ENCODE measurements at regions of chr6 and their contacts with region 1.

Region 1: DNA sequence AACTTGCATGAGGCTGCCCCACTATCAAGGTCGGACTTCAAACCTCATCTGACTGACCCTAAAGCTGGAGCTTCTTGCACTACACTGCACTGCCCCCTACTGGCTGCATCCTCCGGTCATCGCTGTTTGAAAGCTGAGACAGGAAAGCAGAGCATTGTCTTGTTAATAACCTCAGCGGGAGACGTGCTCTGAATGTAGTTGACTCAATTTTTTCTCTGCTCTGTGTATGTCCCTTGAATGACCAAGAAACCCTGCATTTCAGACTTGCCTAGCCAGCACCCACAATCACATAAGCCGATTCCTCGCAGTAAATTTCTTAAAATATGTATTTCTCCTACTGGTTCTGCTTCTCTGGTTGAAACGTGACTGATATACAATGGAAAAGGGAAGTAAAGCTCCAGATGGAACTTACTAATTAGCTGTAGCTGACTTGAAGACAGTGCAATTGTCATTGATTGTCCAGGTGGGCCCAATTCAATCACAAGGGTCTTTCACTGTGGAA is 27.8 kb downstream of the TCF21 start:
- DNase-seq: peak; percentile 60
- H3K4me3 ChIP-seq: no peak overlapping the region; a peak in 1 of 4 replicates
- H3K27ac ChIP-seq: no peak overlapping the region
- H3K4me1 ChIP-seq: peaks cover 0 to 2% of the 10 kb centered on the region in 2 experiments; a peak in 1 of 4 replicates
- H3K27me3 ChIP-seq: peaks cover 5% of the 10 kb centered on the region
- CTCF ChIP-seq: peak; percentile 94
- EP300 ChIP-seq: no peak
- RAD21 ChIP-seq: peak; percentile 88

Region 2: GRCh38 chr6:133568970-133569889 is 347.5 kb before region 1 on chr6:
- CTCF ChIA-PET with region 1: interaction called, 68 read pairs
- POLR2A ChIA-PET with region 1: no interaction called
- DNase-seq: peak; percentile 50
- H3K4me3 ChIP-seq: peak overlapping the region; percentile 35 to 52; a peak in 3 of 4 replicates
- H3K27ac ChIP-seq: no peak overlapping the region
- H3K4me1 ChIP-seq: peaks cover 0 to 5% of the 10 kb centered on the region in 2 experiments; a peak in 2 of 4 replicates
- H3K27me3 ChIP-seq: peaks cover 13% of the 10 kb centered on the region; the same call in 1 of the 2 replicates
- CTCF ChIP-seq: peak; percentile 95
- EP300 ChIP-seq: no peak
- RAD21 ChIP-seq: peak; percentile 61

Region 3: GRCh38 chr6:133817460-133818047 is 99.1 kb before region 1 on chr6:
- CTCF ChIA-PET with region 1: interaction called, 14 read pairs
- POLR2A ChIA-PET with region 1: no interaction called
- DNase-seq: peak; percentile 56
- H3K4me3 ChIP-seq: no peak overlapping the region
- H3K27ac ChIP-seq: no peak overlapping the region
- H3K4me1 ChIP-seq: no peaks in the 10 kb centered on the region
- H3K27me3 ChIP-seq: no peaks in the 10 kb centered on the region; the same call in 1 of the 2 replicates
- CTCF ChIP-seq: peak; percentile 76
- EP300 ChIP-seq: no peak
- RAD21 ChIP-seq: peak; percentile 42

Region 4: GRCh38 chr6:133837801-133838349 is 78.8 kb before region 1 on chr6:
- CTCF ChIA-PET with region 1: interaction called, 15 read pairs
- POLR2A ChIA-PET with region 1: no interaction called
- DNase-seq: peak; percentile 49
- H3K4me3 ChIP-seq: peak overlapping the region; percentile 42 to 61
- H3K27ac ChIP-seq: no peak overlapping the region
- H3K4me1 ChIP-seq: no peaks in the 10 kb centered on the region; a peak in 1 of 4 replicates
- H3K27me3 ChIP-seq: peaks cover 27% of the 10 kb centered on the region
- CTCF ChIP-seq: peak; percentile 66
- EP300 ChIP-seq: no peak
- RAD21 ChIP-seq: peak; percentile 44

Region 5: DNA sequence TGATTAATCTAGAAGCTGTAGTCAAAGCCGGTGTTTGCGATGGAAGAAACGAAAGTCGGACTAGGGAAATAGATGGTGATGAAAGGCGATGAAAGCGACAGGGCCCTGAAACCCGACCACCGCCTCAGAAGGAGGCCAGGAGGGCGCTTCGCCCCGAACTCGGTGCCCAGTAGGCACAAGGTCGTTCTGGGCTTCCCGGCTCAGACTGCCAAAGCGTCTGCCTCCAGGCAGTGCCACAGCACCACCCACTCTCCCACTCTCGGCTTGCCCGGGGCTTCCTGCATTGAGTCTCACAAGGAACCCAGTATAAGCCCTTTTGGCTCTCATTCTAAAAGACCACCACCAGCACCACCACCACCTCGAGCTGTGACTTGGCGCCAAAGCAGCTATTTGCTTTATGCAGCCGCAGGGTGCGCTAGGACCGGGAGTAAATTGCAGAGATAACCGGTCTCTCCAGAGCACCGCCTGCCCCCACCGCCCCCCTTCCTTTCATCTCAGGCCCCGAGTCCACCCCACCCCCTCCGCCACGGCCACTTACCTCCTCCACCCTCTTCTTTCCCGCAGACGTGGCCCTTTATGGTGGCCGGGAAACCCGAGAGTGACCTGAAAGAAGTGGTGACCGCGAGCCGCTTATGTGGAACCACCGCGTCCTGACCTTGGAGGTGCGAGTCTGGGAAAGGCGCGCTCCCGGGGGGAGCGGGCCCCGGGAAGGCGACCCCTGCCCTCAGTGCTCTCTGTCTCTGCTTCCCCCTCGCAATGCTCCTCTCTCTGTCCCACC is 25.4 kb before region 1 on chr6:
- CTCF ChIA-PET with region 1: interaction called, 51 read pairs
- POLR2A ChIA-PET with region 1: no interaction called
- DNase-seq: peak; percentile 59
- H3K4me3 ChIP-seq: peak overlapping the region in 1 of 2 experiments; percentile 9; a peak in 1 of 4 replicates
- H3K27ac ChIP-seq: no peak overlapping the region
- H3K4me1 ChIP-seq: peaks cover 0 to 8% of the 10 kb centered on the region in 2 experiments; a peak in 1 of 4 replicates
- H3K27me3 ChIP-seq: peaks cover 95% of the 10 kb centered on the region
- CTCF ChIP-seq: no peak
- EP300 ChIP-seq: no peak
- RAD21 ChIP-seq: no peak

Region 6: DNA sequence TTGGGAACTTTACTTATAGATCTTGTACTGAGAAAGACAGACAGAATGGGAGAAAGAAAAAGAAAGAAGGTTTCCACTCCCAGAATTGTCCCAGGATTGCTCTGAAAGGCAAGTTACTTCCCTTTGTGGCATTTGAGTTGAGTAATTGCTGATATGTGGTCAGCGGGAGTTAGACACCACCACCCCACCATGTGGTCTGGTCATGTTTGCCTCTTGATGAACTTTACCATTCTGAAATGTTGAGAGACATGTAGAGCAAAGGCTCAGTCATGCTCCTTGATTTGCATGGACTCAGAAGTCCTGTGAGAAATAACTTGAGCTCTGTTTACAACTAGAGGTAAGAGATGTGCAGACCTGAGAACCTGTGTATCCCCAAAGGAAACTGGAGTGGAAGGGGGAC is 10.7 kb before region 1 on chr6:
- CTCF ChIA-PET with region 1: interaction called, 24 read pairs
- POLR2A ChIA-PET with region 1: no interaction called
- DNase-seq: no peak
- H3K4me3 ChIP-seq: no peak overlapping the region
- H3K27ac ChIP-seq: no peak overlapping the region
- H3K4me1 ChIP-seq: no peaks in the 10 kb centered on the region
- H3K27me3 ChIP-seq: peaks cover 25% of the 10 kb centered on the region; the same call in 1 of the 2 replicates
- CTCF ChIP-seq: no peak
- EP300 ChIP-seq: no peak
- RAD21 ChIP-seq: no peak